ENCODE measurements at regions of chr3 and their contacts with region 1.

Region 1: GRCh38 chr3:86774082-86774691 is 216.8 kb downstream of the VGLL3 start:
- DNase-seq: peak in 1 of 4 donors; percentile 55
- ATAC-seq: no peak
- H3K4me3 ChIP-seq: no peak overlapping the region
- H3K27ac ChIP-seq: no peak overlapping the region
- H3K4me1 ChIP-seq: no peaks in the 10 kb centered on the region
- H3K27me3 ChIP-seq: no peaks in the 10 kb centered on the region
- CTCF ChIP-seq: peak; percentile 23 to 45

Region 2: DNA sequence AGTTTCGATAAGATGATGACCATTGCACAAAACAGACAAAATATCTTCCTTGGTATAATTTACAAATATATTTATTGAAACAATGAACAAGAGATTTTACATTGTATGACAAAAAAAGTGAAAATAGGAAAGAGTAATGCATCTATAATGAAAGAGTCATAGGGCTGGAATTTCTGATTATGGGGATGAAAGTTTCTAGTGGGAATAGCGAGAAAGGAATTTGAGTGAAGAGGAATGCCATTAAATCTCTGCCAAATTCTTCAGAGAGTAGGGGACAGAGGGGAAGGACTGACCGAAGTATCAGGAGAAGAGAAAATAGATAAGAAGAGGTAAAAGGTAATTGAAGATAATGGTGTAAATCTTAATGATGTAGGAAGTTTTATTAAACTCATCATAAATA is 91.3 kb after region 1 on chr3:
- intact Hi-C with region 1: no loop called
- DNase-seq: no peak
- ATAC-seq: no peak
- H3K4me3 ChIP-seq: no peak overlapping the region
- H3K27ac ChIP-seq: no peak overlapping the region
- H3K4me1 ChIP-seq: no peaks in the 10 kb centered on the region
- H3K27me3 ChIP-seq: no peaks in the 10 kb centered on the region
- CTCF ChIP-seq: no peak

Region 3: GRCh38 chr3:87167628-87168456 is 393.7 kb after region 1 on chr3:
- intact Hi-C with region 1: loop called in 1 of 2 experiments (anchors 5 kb)
- DNase-seq: peak in 2 of 4 donors; percentile 66 to 68
- ATAC-seq: peak; percentile 70
- H3K4me3 ChIP-seq: peak overlapping the region in 1 of 2 donors; percentile 4
- H3K27ac ChIP-seq: no peak overlapping the region
- H3K4me1 ChIP-seq: no peaks in the 10 kb centered on the region
- H3K27me3 ChIP-seq: no peaks in the 10 kb centered on the region
- CTCF ChIP-seq: peak; percentile 48 to 66